Activated CD8-positive, alpha-beta T cell treated with anti-CD3 and anti-CD28 coated beads for 36 hours (primary cell): ENCODE measurements at regions of chr1 and their contacts with region 1.

Region 1: DNA sequence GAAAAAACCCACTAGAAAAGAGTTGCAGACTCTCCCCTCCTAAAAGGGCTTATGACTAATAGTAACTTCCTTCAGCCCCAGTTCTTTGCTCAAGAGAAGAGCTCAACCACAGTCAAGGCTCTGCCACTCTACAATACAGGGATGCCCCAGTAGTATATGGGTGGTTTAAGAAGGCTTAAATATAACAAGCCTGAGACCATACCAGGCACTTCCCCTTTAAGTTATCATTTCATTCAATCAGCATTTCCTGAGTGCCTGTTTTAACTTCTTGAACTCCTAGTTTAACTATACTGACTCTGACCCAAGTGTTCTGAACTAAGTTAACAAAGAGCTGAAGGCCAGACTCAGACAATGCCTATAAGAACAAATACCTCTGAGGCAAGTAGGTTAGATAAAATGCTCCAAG is 19.8 kb downstream of the PRPF38A start:
- DNase-seq: peak; percentile 39
- ATAC-seq: peak; percentile 91
- H3K4me3 Mint-ChIP-seq: peak overlapping the region; percentile 54
- H3K27ac Mint-ChIP-seq: peak overlapping the region; percentile 95
- H3K4me1 Mint-ChIP-seq: peaks cover 41% of the 10 kb centered on the region
- H3K27me3 Mint-ChIP-seq: no peaks in the 10 kb centered on the region
- CTCF ChIP-seq: no peak

Region 2: DNA sequence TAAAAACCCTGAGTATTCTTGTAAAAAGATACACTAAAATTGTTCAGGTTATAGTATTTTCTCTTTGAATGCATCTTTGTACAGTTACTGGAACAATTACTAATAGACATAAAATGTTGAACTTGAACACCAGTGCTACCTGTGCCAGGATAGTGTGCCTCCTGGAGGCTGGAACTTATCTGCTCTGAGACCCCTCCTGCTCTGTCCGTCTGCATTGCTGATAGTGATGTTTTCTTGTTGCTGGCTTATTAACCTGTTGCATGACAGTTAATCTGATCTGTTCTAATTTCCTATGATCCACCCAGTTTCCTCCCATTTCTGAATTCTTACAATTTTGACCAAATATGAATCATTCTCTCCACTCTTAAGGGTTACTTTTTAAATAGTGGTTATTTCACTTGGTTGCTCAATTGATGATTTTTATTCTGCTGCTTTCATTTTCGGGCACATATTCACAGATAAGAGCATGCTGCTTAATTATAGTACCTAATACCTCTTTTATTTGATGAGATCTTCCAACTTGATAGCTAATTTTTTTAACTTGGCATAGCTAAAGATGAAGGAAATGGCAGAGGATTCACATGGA is 159.6 kb before region 1 on chr1:
- CTCF ChIA-PET with region 1: no interaction called
- POLR2A ChIA-PET with region 1: no interaction called
- intact Hi-C with region 1: no loop called
- DNase-seq: no peak
- ATAC-seq: no peak
- H3K4me3 Mint-ChIP-seq: no peak overlapping the region
- H3K27ac Mint-ChIP-seq: no peak overlapping the region
- H3K4me1 Mint-ChIP-seq: peaks cover 3% of the 10 kb centered on the region
- H3K27me3 Mint-ChIP-seq: no peaks in the 10 kb centered on the region
- CTCF ChIP-seq: no peak

Region 3: GRCh38 chr1:52552505-52553361 is 128.5 kb after region 1 on chr1 and contains the start of gene TUT4:
- CTCF ChIA-PET with region 1: interaction called, 3 read pairs
- POLR2A ChIA-PET with region 1: no interaction called
- intact Hi-C with region 1: loop called (anchors 10 kb)
- DNase-seq: peak; percentile 84
- ATAC-seq: peak; percentile 67
- H3K4me3 Mint-ChIP-seq: no peak within 1 kb of the TSS
- H3K27ac Mint-ChIP-seq: peak within 1 kb of the TSS; percentile 65
- H3K4me1 Mint-ChIP-seq: peaks cover 38% of the 10 kb centered on the region
- H3K27me3 Mint-ChIP-seq: no peaks in the 10 kb centered on the region
- CTCF ChIP-seq: no peak
- total RNA-seq, gene TUT4: 51.6 to 59.0 TPM

Region 4: GRCh38 chr1:52683367-52683940 is 259.2 kb after region 1 on chr1:
- CTCF ChIA-PET with region 1: interaction called, 7 read pairs
- POLR2A ChIA-PET with region 1: no interaction called
- intact Hi-C with region 1: loop called (anchors 10 kb)
- DNase-seq: no peak
- ATAC-seq: no peak
- H3K4me3 Mint-ChIP-seq: no peak overlapping the region
- H3K27ac Mint-ChIP-seq: no peak overlapping the region
- H3K4me1 Mint-ChIP-seq: peaks cover 8% of the 10 kb centered on the region
- H3K27me3 Mint-ChIP-seq: no peaks in the 10 kb centered on the region
- CTCF ChIP-seq: no peak